Activated CD8-positive, alpha-beta T cell treated with anti-CD3 and anti-CD28 coated beads for 36 hours (primary cell): ENCODE measurements at regions of chr1 and their contacts with region 1.

Region 1: DNA sequence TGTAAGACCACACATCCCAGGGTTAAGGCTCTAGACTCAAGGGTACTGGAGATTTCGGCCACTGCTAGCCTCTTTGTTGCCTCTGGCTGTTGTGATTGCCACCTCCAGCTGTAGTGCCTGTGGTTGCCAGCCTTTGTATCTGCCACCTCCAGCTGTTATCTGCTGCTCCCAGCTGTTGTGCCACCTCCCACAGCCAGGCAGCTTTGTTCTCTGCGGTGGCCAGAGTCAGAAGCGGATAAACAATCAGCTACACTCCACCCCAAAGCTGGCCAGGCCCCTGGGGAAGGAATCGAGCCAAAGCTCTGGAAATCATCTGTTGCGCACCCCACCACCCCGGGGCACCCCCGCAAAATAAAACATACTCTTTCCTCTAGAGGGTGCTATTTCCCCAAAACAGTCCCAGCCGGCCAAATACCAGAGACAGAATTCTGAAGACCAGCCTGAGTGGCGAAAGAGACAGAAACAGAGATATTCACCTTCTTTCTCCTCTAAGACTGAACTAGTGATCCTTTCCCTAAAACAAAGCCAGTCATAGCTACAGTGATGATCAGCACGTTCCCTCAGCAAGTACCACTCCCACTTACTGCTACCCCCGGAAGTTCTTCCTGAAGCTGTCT is 14.8 kb upstream of the PIGM start:
- DNase-seq: peak; percentile 54
- ATAC-seq: peak; percentile 87
- H3K4me3 Mint-ChIP-seq: peak overlapping the region; percentile 70
- H3K27ac Mint-ChIP-seq: peak overlapping the region; percentile 81
- H3K4me1 Mint-ChIP-seq: peaks cover 12% of the 10 kb centered on the region
- H3K27me3 Mint-ChIP-seq: peaks cover 12% of the 10 kb centered on the region
- CTCF ChIP-seq: peak; percentile 91

Region 2: GRCh38 chr1:159839116-159839849 is 207.3 kb before region 1 on chr1:
- CTCF ChIA-PET with region 1: no interaction called
- POLR2A ChIA-PET with region 1: no interaction called
- intact Hi-C with region 1: no loop called
- DNase-seq: no peak
- ATAC-seq: no peak
- H3K4me3 Mint-ChIP-seq: no peak overlapping the region
- H3K27ac Mint-ChIP-seq: no peak overlapping the region
- H3K4me1 Mint-ChIP-seq: peaks cover 7% of the 10 kb centered on the region
- H3K27me3 Mint-ChIP-seq: no peaks in the 10 kb centered on the region
- CTCF ChIP-seq: no peak

Region 3: GRCh38 chr1:160018900-160019299 is 27.7 kb before region 1 on chr1:
- CTCF ChIA-PET with region 1: interaction called, 10 read pairs
- POLR2A ChIA-PET with region 1: no interaction called
- intact Hi-C with region 1: no loop called
- DNase-seq: peak; percentile 15
- ATAC-seq: peak; percentile 47
- H3K4me3 Mint-ChIP-seq: no peak overlapping the region
- H3K27ac Mint-ChIP-seq: no peak overlapping the region
- H3K4me1 Mint-ChIP-seq: peaks cover 4% of the 10 kb centered on the region
- H3K27me3 Mint-ChIP-seq: peaks cover 6% of the 10 kb centered on the region
- CTCF ChIP-seq: no peak

Region 4: GRCh38 chr1:160031365-160032164 is 15.0 kb before region 1 on chr1 and contains the start of gene PIGM:
- CTCF ChIA-PET with region 1: interaction called, 66 read pairs
- POLR2A ChIA-PET with region 1: interaction called, 7 read pairs
- intact Hi-C with region 1: no loop called
- DNase-seq: peak; percentile 98
- ATAC-seq: peak; percentile 99
- H3K4me3 Mint-ChIP-seq: peak within 1 kb of the TSS; percentile 88
- H3K27ac Mint-ChIP-seq: peak within 1 kb of the TSS; percentile 81
- H3K4me1 Mint-ChIP-seq: peaks cover 32% of the 10 kb centered on the region
- H3K27me3 Mint-ChIP-seq: no peaks in the 10 kb centered on the region
- CTCF ChIP-seq: no peak
- total RNA-seq, gene PIGM: 3.9 to 4.0 TPM